Activated CD8-positive, alpha-beta T cell treated with anti-CD3 and anti-CD28 coated beads, Interleukin-2, amount 10 ng/mL, durations not matched to agents 7 days and 5 days (primary cell): ENCODE measurements at regions of chr15 and their contacts with region 1.

Region 1: DNA sequence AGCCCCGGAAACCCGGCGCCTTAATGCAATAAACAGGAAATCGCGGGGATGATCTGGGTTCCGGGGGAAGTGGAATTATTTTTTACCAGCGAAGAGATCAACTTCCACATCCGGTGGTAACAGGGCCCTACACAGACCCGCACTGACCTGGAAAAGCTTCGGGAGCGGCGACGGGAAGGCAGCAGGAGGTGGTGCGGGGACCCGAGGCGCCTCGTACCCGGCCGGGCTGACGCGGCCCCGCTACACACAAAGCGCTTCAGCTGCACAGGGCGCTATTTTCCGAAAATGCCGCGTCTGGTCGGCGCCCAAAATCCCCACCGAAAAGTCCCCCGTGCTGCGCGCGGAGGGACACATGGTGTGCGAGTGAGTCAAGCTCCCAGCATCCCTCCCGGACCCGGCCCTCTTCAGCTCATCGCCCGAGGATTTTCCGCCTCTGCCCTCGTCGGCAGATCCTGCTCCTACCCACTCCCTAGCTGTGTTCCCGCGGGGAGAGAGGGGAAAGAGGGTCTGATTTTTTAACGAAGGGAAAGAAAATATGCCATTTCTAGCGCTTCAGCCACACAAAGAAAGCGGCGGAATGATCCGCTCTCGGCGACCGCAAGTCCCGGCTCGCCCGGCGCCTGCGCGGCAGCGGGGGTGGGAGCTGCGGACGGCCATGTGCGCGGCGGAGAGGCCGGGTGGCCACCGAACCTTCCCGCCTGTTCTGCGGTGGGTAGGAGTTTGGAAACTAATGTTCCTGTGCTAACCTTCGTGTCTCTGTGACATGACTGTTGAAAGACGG is at the start of gene GABPB1:
- DNase-seq: peak; percentile 91
- ATAC-seq: peak; percentile 59
- H3K4me3 Mint-ChIP-seq: peak within 1 kb of the TSS; percentile 85
- H3K27ac Mint-ChIP-seq: peak within 1 kb of the TSS; percentile 98
- H3K4me1 Mint-ChIP-seq: peaks cover 36% of the 10 kb centered on the region
- H3K27me3 Mint-ChIP-seq: no peaks in the 10 kb centered on the region
- total RNA-seq, gene GABPB1: 33.5 to 35.2 TPM

Region 2: DNA sequence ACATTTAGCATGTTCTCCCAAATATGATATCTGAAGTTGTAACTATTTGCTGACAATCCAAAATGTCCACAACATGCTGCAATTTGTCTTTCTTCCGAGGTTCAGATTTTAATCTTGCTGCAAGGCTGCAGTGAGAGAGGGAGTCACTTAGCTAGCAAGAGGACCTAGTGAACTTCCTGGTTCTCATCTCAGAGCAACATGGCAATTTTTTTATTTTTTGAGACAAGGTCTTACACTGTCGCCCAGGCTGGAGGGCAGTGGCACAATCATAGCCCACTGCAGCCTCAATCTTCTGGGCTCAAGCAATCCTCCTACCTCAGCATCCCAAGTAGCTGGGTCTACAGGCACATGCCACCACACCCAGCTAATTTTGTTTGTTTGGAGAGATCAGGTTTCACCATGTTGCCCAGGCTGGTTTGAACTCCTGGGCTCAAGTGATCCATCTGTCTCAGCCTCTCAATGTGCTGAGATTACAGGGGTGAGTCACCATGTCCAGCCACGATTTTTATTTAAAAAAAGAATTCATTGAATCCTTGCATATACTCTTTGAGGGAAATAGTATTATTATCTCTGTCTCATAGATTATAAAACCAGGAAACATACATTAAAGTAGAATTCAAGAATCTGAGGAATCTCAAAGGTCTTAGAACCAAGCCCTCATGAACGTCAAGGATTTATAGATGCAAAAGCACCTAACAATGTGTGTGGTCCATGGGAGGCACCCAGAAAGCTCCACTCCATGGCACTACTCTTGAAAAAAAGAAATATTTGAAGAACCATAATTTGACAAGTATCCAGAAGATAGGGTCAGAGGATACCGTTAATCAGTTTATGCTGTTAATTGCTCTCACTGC is 98.6 kb before region 1 on chr15:
- CTCF ChIA-PET with region 1: no interaction called
- POLR2A ChIA-PET with region 1: interaction called, 46 read pairs
- DNase-seq: peak; percentile 12
- ATAC-seq: no peak
- H3K4me3 Mint-ChIP-seq: no peak overlapping the region
- H3K27ac Mint-ChIP-seq: no peak overlapping the region
- H3K4me1 Mint-ChIP-seq: peaks cover 58% of the 10 kb centered on the region
- H3K27me3 Mint-ChIP-seq: no peaks in the 10 kb centered on the region

Region 3: DNA sequence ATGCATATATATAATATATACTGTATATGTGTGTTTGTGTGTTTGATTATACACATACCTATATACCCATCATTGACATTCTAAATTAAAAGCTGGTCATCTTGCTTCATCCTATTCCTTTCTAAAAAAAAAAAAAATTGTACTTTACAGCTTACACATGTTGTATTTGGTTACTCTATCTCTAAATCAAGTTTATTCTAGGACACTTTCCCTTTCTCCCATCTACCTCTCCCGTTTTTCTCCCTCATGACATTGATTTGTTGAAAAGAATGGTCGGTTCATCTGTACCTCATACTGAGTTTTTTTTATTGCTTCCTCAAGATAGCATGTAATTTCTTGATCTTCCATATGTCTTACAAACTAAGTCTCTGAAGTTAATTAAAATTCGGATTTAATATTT is 26.9 kb before region 1 on chr15:
- CTCF ChIA-PET with region 1: no interaction called
- POLR2A ChIA-PET with region 1: interaction called, 10 read pairs
- DNase-seq: no peak
- ATAC-seq: no peak
- H3K4me3 Mint-ChIP-seq: no peak overlapping the region
- H3K27ac Mint-ChIP-seq: no peak overlapping the region
- H3K4me1 Mint-ChIP-seq: peaks cover 2% of the 10 kb centered on the region
- H3K27me3 Mint-ChIP-seq: no peaks in the 10 kb centered on the region

Region 4: DNA sequence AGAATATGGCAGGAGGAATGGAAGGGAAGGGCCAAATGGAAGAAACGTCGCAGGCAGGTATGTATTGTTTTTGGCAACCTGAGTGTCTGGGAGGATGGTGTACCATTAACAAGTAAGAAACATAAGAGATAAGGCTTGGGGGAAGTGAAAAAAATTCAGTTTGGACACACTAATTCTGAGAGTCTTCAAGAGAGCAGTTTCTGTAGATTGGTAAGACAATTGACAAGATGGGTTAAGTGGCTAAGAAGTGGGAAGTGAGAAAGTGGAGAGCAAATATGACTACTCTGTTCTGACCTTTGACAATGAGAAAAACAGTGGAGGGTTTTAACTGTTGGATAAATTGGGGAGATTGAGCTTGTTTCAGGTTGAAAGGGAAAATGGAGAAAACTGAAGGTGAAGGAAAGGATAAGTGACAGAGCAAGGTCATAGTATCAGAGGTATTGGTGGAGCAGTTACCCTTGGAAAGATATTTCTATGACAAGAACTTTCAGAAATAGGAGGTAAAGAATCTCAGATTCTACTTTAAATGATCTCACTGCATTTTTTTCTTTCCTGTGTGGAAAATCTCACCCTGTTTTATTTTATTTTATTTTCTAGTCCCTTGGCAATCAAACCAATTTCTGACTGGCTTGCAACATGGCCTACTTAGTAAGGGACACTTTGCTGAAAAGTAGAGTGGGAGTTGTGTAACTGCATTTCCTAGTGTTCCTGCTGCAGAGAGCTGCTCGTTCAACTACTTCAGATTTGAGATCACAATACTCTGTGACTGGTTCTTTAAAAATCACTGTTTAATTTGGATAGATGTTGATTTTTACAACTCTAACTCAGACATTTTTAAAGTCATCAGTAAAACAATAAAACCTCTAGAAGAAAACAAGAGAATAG is 23.1 kb after region 1 on chr15:
- CTCF ChIA-PET with region 1: interaction called, 4 read pairs
- POLR2A ChIA-PET with region 1: interaction called, 13 read pairs
- DNase-seq: no peak
- ATAC-seq: no peak
- H3K4me3 Mint-ChIP-seq: no peak overlapping the region
- H3K27ac Mint-ChIP-seq: peak overlapping the region; percentile 0
- H3K4me1 Mint-ChIP-seq: peaks cover 8% of the 10 kb centered on the region
- H3K27me3 Mint-ChIP-seq: peaks cover 6% of the 10 kb centered on the region

Region 5: GRCh38 chr15:50542887-50543210 is 187.8 kb after region 1 on chr15:
- CTCF ChIA-PET with region 1: no interaction called
- POLR2A ChIA-PET with region 1: no interaction called
- DNase-seq: no peak
- ATAC-seq: no peak
- H3K4me3 Mint-ChIP-seq: no peak overlapping the region
- H3K27ac Mint-ChIP-seq: no peak overlapping the region
- H3K4me1 Mint-ChIP-seq: no peaks in the 10 kb centered on the region
- H3K27me3 Mint-ChIP-seq: peaks cover 14% of the 10 kb centered on the region

Region 6: GRCh38 chr15:50765195-50765973 is 410.4 kb after region 1 on chr15 and contains the start of gene SPPL2A:
- CTCF ChIA-PET with region 1: no interaction called
- POLR2A ChIA-PET with region 1: interaction called, 15 read pairs
- DNase-seq: peak; percentile 90
- ATAC-seq: peak; percentile 96
- H3K4me3 Mint-ChIP-seq: peak within 1 kb of the TSS; percentile 92
- H3K27ac Mint-ChIP-seq: peak within 1 kb of the TSS; percentile 97
- H3K4me1 Mint-ChIP-seq: peaks cover 41% of the 10 kb centered on the region
- H3K27me3 Mint-ChIP-seq: no peaks in the 10 kb centered on the region
- total RNA-seq, gene SPPL2A: 77.9 to 83.6 TPM